ENCODE measurements at regions of chr21 and their contacts with region 1.

Region 1: GRCh38 chr21:43362321-43362791 is 64.6 kb downstream of the SIK1 start:
- DNase-seq: peak; percentile 86
- ATAC-seq: peak; percentile 70
- H3K4me3 ChIP-seq: no peak overlapping the region
- H3K27ac ChIP-seq: peak overlapping the region; percentile 80
- H3K4me1 ChIP-seq: peaks cover 10% of the 10 kb centered on the region
- H3K27me3 ChIP-seq: no peaks in the 10 kb centered on the region
- CTCF ChIP-seq: 0 out of 2 replicates have a peak, but pooled peaks have one; percentile 9
- POLR2A ChIP-seq: no peak
- RAD21 ChIP-seq: peak; percentile 19

Region 2: DNA sequence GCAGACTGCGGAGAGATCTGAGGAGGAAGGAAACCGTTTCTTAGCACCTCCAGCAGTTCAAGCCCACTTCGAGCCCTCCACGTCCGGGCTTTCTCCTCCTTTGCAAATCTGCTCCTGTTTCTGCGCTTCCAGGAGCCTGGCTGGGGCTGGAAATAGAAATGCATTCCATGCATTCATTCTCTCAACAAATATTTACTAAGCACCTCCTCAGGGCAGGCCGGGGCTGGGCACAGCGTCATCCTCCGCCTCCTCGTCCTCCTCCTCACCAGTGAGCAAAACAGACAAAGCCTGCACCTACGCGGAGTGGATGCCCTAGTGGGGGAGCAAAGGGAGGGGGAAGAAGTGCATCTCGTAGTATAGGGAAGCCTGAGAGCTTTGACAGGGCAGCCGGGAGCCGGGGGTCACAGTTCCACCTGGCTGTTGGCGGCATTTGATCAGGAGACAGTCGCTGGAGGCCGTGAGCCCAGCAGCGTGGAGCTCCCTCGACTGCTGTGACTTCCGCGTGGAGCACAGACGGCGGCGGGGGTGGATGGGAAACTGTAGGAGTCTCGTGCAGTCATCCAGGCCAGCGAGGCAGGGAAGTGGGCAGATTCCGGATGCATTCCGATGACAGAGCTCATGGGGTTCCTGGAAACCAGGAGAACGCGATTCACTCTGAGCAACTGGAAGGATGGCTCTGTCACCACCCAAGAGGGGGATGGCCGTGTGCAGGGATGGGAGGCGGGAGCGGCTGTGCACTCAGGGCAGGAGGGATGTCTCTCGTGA is 28.9 kb before region 1 on chr21:
- CTCF ChIA-PET with region 1: no interaction called
- POLR2A ChIA-PET with region 1: no interaction called
- dilution Hi-C with region 1: no loop called
- in situ Hi-C with region 1: no loop called
- intact Hi-C with region 1: loop called (anchors 1 kb)
- DNase-seq: peak; percentile 96
- ATAC-seq: peak; percentile 88
- H3K4me3 ChIP-seq: peak overlapping the region; percentile 18; the same call in 1 of the 2 replicates
- H3K27ac ChIP-seq: peak overlapping the region; percentile 96
- H3K4me1 ChIP-seq: peaks cover 23% of the 10 kb centered on the region
- H3K27me3 ChIP-seq: no peaks in the 10 kb centered on the region
- CTCF ChIP-seq: no peak
- POLR2A ChIP-seq: peak; percentile 82
- RAD21 ChIP-seq: peak; percentile 39

Measured in IMR-90 (cell line).